Activated CD8-positive, alpha-beta memory T cell treated with anti-CD3 and anti-CD28 coated beads, Interleukin-2, amount 10 ng/mL, durations not matched to agents 7 days and 5 days (primary cell): ENCODE measurements at regions of chr10 and their contacts with region 1.

Region 1: DNA sequence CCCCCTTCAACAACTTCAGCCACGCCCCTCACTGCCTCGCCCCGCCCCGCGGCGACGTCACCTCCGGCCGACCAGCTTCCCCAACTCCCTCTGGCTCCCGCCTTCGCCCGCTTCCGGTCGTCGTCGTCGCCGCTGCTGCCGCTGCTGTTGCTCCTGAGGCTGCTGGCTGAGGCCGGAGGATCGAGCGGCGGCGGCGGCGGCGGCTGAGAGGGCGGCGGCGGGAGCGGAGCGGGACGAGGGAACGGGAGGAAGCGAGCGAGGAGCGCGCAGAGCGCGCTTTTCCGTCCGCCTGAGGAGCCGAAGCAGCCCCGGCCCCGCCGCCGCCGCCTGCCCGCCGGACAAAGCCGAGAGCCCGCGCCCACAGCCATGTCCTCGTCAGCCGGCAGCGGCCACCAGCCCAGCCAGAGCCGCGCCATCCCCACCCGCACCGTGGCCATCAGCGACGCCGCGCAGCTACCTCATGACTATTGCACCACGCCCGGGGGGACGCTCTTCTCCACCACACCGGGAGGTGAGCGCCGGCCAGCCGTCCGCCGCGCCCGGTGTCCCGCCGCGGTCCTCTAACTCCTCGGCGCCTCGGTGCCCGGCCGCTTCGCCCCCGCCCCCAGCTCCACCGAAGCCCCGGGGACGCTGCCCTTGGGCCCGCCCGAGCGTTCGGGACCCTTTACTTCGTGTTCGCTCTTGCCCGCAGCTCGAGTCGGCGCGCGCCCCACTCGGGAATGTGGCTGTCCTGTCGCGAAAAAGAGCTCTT is at the start of gene EIF4EBP2:
- DNase-seq: peak; percentile 98
- ATAC-seq: peak; percentile 93
- H3K4me3 Mint-ChIP-seq: peak within 1 kb of the TSS; percentile 95
- H3K27ac Mint-ChIP-seq: peak within 1 kb of the TSS; percentile 90
- H3K4me1 Mint-ChIP-seq: peaks cover 34% of the 10 kb centered on the region
- H3K27me3 Mint-ChIP-seq: no peaks in the 10 kb centered on the region
- total RNA-seq, gene EIF4EBP2: 37.8 to 51.7 TPM

Region 2: DNA sequence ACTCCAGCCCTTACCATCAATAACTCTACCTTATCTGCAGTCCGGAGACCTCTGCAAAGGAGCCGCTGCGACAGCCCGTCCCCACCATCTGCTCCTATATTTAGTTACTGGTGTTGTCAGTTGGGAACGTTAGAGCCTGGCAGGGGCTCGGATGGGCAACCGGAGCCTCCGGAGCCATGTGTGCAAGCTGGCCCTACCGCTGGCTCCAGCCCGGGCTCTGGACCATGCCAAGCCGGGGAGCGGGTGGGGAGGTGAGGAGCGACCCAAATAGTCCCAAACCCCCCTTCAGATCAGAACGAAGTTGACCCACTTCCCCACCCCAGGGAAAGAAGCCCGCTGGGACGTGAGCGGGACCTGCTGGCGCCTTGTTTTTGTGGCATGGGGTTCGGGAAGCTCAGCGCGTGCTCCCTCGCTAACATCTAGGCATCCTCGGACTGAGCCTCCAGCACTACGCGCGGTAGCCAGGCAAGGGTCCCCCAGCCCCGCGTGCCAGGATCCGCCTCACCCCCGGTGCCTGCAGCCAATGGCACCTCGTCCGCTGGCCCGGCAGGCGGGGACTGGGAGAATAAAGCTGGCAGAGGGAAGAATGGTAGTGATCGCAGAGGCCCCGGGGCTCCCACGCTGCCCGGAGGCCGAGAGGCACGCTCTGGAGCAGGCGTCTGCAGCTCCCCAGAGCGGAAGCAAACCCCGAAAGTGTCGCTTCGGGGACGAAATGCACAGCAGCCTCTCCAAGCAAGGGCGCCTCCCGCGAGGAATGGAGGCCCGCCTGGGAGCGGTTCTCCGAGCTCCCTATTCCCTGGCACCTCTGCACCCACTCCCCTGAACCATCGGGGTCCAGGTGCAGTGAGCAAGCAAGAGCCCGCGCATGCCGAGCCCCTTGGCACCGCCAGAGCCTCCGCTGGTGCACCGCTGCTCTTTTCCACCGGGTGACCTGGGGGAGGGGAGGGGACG is 22.5 kb before region 1 on chr10:
- CTCF ChIA-PET with region 1: interaction called, 28 read pairs
- DNase-seq: peak; percentile 65
- ATAC-seq: peak; percentile 52
- H3K4me3 Mint-ChIP-seq: peak overlapping the region; percentile 81
- H3K27ac Mint-ChIP-seq: peak overlapping the region; percentile 19
- H3K4me1 Mint-ChIP-seq: peaks cover 11% of the 10 kb centered on the region
- H3K27me3 Mint-ChIP-seq: no peaks in the 10 kb centered on the region

Region 3: GRCh38 chr10:70440296-70441160 is 36.3 kb after region 1 on chr10:
- CTCF ChIA-PET with region 1: no interaction called
- DNase-seq: no peak
- ATAC-seq: peak; percentile 51
- H3K4me3 Mint-ChIP-seq: no peak overlapping the region
- H3K27ac Mint-ChIP-seq: no peak overlapping the region
- H3K4me1 Mint-ChIP-seq: peaks cover 9% of the 10 kb centered on the region
- H3K27me3 Mint-ChIP-seq: peaks cover 64% of the 10 kb centered on the region

Region 4: DNA sequence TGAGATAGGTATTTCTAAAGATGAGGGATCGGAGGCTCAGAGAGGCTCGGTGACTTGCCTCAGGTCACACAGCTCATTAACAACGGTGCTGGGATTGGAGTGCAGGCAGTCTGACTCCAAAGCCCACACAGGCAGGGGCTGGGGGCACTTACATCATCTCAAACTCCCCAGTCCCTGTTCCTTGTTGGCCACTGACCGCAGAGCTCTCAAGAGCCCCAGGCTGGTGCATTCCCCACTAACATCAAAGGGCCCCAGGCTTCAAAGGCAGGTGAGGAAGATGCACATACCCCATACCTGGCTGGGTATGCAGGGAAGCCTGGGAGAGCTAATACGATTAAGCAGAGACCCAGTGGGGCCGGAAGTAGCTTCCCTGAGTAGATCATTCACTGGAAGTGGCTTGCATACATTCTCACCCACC is 51.0 kb after region 1 on chr10:
- CTCF ChIA-PET with region 1: no interaction called
- DNase-seq: no peak
- ATAC-seq: no peak
- H3K4me3 Mint-ChIP-seq: no peak overlapping the region
- H3K27ac Mint-ChIP-seq: no peak overlapping the region
- H3K4me1 Mint-ChIP-seq: peaks cover 2% of the 10 kb centered on the region
- H3K27me3 Mint-ChIP-seq: peaks cover 50% of the 10 kb centered on the region